CD14-positive monocyte (primary cell): ENCODE measurements at regions of chr1 and their contacts with region 1.

Region 1: DNA sequence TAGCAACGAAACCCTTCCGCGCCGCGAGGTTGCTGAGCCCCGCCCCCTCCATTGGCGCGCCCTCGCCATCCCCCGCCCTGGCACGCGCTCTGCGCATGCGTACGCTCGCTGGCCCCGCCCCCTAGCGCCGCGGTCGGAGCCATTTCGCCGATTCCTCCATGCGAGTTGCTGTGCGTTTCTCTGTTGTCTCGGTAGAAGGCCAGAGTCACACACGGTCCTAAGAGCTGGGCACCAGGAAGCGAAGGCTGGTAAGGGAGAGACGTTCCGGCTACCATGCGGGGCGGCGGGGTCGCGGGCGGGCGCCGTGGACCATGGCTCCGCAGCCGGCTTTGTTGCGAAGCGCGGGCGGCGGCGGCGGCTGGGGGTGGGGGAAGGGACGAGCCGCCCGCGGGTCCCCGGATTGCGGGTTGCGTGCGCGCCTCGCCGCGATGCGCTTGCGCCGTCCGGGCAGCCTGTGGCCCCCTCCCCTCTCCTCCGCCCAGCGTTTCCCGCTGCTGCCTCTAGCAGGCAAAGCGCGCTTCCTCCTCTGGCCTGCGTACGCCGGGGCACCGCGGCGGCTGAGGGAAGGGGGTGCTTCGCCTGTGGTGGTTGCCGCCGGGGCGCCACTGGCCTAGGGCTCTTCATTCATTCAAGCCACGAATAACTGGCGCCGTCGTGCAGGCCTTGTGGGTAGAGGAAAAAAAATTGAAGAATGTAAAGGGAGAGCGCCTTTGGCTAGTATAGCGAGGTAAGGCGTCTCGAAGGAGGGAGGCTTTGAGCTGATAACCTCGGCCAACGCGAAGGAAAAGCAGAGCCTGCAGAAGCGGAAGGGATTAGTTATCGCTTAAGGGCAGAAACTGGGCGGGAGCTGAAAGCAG is at the start of gene DHX9:
- DNase-seq: peak; percentile 82 to 90 (median 86)
- H3K4me3 ChIP-seq: peak within 1 kb of the TSS; percentile 83 to 97 (median 86)
- H3K4me3 Mint-ChIP-seq: peak within 1 kb of the TSS; percentile 94 to 96
- H3K27ac ChIP-seq: peak within 1 kb of the TSS; percentile 82 to 86
- H3K27ac Mint-ChIP-seq: peak within 1 kb of the TSS; percentile 90 to 99 (median 96)
- H3K4me1 ChIP-seq: peaks cover 17 to 27% of the 10 kb centered on the region in 2 donors
- H3K4me1 Mint-ChIP-seq: peaks cover 29% of the 10 kb centered on the region
- H3K27me3 ChIP-seq: no peaks in the 10 kb centered on the region
- H3K27me3 Mint-ChIP-seq: peaks cover 0 to 2% (median 1%) of the 10 kb centered on the region in 3 donors
- CTCF ChIP-seq: peak; percentile 28
- polyA plus RNA-seq, gene DHX9: 57.9 to 71.5 (median 58.5) TPM

Region 2: DNA sequence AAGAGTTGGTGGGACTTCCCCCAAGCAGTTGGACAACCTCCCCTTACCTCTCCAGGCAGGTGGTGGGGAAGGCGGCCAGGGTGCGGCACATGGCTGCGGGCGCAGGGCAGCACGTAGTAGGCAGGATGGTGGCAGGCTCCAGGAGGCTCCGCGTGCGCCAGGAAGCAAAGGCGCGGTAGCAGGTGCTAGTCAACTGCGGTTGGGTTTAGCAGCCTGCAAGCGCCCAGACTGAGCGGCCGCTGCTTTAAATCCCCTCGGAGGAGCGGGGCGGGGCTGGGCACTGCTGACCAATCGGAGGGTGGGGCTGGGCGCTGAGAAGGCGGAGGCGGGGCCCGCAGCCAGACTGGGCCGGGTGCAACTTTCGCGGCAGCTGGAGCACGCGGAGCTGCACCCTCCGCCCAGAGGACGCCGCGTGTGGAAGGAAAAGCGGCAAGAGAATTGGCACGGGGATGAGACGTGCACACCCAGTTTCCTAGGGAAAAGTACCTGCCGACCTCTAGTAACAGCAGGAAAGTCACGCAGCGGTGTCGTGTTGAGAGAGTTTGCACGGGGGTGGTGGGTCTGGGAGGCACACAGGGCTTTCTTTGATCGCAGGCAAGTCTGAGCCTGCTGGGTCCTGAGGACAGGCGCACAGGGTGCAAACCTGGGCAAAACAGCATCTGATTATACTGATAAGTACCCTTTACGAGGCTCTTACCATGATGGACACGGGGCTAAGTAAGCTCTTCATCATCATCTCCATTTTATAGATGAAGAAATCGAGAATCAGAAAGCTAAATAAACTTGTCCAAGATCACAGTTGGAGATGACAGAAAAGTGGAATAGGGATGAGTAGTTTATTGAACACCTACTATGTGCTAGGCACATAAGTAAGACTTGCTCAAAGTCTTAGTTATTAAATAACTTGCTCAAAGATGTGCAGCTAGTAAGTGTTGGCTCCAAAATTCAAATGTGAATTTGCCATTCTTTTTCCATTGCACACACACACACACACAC is 235.0 kb before region 1 on chr1 and contains the start of gene RGS16:
- intact Hi-C with region 1: loop called in 1 of 2 experiments (anchors 2 kb)
- DNase-seq: peak; percentile 72 to 79 (median 77)
- H3K4me3 ChIP-seq: peak within 1 kb of the TSS in 2 of 3 experiments; percentile 5 to 68
- H3K4me3 Mint-ChIP-seq: peak within 1 kb of the TSS; percentile 9 to 77
- H3K27ac ChIP-seq: no peak within 1 kb of the TSS
- H3K27ac Mint-ChIP-seq: peak within 1 kb of the TSS in 3 of 7 donors; percentile 16 to 52 (median 33)
- H3K4me1 ChIP-seq: peaks cover 11 to 13% of the 10 kb centered on the region in 2 donors
- H3K4me1 Mint-ChIP-seq: peaks cover 20% of the 10 kb centered on the region
- H3K27me3 ChIP-seq: peaks cover 13 to 46% of the 10 kb centered on the region in 2 donors
- H3K27me3 Mint-ChIP-seq: peaks cover 9 to 23% (median 19%) of the 10 kb centered on the region in 3 donors
- CTCF ChIP-seq: no peak
- polyA plus RNA-seq, gene RGS16: 0.07 to 0.44 TPM in 2 of 3 donors, not detected in the other

Region 3: DNA sequence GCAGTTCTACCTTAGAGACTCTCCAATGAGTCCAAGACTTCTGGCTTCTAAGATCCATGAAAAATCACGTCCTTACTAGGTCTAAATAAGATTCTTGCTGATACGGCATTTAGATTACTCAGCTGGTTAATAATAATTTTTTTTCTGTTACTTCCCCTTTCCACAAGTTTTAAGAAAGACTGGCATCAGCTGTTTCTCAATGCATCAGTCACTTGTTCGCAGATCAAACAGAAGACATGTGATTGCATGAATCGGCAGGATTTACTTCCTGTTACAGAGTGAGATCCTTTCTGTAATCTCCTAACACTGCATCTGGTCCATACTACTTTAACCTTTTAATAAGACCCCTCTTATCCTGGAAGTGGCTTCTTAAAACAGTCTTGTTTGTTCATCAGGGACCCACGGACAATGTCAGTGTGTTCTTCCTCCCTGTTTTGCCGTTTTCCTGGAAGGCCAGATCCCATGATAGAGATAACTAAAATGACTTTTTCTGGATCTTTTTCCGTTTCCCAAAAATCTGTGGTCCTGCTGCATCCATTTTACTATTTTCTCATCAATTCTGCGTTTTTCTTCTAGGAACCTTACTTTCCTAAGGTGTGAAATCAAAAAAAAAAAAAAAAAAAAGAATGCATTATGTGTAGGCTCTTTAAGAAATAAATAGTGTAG is 43.7 kb before region 1 on chr1:
- intact Hi-C with region 1: loop called in 1 of 2 experiments (anchors 5 kb)
- DNase-seq: peak; percentile 92 to 99 (median 98)
- H3K4me3 ChIP-seq: peak overlapping the region; percentile 9 to 65 (median 44)
- H3K4me3 Mint-ChIP-seq: peak overlapping the region in 1 of 2 donors; percentile 64
- H3K27ac ChIP-seq: peak overlapping the region; percentile 68 to 95
- H3K27ac Mint-ChIP-seq: peak overlapping the region; percentile 94 to 99 (median 96)
- H3K4me1 ChIP-seq: peaks cover 47 to 60% of the 10 kb centered on the region in 2 donors
- H3K4me1 Mint-ChIP-seq: peaks cover 60% of the 10 kb centered on the region
- H3K27me3 ChIP-seq: no peaks in the 10 kb centered on the region
- H3K27me3 Mint-ChIP-seq: peaks cover under 1 to 3% (median 3%) of the 10 kb centered on the region in 3 donors
- CTCF ChIP-seq: no peak